ENCODE measurements at regions of chr2 and their contacts with region 1.

Region 1: DNA sequence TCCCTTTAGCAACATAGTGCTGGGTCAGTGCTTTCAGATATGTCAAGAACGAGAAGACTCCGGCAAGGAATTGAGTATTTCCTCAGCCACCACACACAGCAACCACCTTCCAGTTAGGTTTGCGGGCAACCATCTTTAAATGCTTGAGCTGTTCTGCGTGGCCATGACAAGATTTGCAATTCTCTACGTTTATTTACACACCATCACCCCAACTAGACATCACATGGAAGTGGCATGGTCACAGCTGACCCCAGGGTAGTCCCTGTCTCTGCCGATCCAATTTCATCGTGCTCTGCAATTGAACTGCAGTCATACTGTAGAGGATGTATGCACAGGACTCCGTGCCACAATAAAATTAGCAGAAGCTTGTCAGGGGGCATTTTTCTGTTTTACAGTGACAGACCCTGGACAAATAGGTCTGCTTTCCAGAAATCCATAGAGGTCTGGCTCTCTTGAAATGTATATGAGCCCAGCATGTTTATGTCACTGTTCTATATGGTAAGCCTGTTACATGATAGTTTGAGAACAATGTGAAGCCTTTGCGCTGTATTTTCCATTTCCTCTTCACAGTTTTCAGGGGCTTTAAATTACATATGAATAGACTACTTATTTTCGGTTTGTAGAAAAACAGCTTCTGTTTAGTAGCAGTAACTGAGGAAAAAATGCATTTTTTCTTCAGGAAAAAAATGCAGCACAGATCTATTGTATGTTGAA is 605.2 kb downstream of the NR4A2 start:
- H3K4me3 Mint-ChIP-seq: peak overlapping the region; percentile 32
- H3K27ac Mint-ChIP-seq: no peak overlapping the region
- H3K4me1 Mint-ChIP-seq: no peaks in the 10 kb centered on the region
- H3K27me3 Mint-ChIP-seq: peaks cover 4% of the 10 kb centered on the region

Region 2: DNA sequence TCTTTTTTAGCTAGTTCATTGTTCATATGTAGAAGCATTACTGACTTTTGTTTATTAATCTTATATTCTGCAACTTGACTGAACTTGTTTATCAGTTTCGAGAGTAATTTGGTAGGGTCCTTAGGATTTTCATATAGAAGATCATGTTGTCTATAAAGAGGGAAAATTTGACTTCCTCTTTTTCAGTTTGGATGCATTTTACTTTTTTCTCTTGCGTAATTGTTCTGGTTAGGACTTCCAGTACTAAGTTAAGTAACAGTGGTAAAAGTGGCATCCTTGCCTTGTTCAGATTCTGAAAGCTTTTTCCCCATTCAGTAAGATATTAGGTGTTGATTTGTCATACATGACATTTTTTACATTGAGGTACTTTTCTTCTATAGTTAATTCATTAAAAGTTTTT is 302.8 kb before region 1 on chr2:
- intact Hi-C with region 1: no loop called
- H3K4me3 Mint-ChIP-seq: no peak overlapping the region
- H3K27ac Mint-ChIP-seq: no peak overlapping the region
- H3K4me1 Mint-ChIP-seq: no peaks in the 10 kb centered on the region
- H3K27me3 Mint-ChIP-seq: no peaks in the 10 kb centered on the region

Region 3: GRCh38 chr2:155679647-155680046 is 47.7 kb before region 1 on chr2:
- intact Hi-C with region 1: loop called (anchors 1 kb)
- H3K4me3 Mint-ChIP-seq: no peak overlapping the region
- H3K27ac Mint-ChIP-seq: no peak overlapping the region
- H3K4me1 Mint-ChIP-seq: no peaks in the 10 kb centered on the region
- H3K27me3 Mint-ChIP-seq: no peaks in the 10 kb centered on the region